HCT116 (cell line): ENCODE measurements at regions of chr6 and their contacts with region 1.

Region 1: DNA sequence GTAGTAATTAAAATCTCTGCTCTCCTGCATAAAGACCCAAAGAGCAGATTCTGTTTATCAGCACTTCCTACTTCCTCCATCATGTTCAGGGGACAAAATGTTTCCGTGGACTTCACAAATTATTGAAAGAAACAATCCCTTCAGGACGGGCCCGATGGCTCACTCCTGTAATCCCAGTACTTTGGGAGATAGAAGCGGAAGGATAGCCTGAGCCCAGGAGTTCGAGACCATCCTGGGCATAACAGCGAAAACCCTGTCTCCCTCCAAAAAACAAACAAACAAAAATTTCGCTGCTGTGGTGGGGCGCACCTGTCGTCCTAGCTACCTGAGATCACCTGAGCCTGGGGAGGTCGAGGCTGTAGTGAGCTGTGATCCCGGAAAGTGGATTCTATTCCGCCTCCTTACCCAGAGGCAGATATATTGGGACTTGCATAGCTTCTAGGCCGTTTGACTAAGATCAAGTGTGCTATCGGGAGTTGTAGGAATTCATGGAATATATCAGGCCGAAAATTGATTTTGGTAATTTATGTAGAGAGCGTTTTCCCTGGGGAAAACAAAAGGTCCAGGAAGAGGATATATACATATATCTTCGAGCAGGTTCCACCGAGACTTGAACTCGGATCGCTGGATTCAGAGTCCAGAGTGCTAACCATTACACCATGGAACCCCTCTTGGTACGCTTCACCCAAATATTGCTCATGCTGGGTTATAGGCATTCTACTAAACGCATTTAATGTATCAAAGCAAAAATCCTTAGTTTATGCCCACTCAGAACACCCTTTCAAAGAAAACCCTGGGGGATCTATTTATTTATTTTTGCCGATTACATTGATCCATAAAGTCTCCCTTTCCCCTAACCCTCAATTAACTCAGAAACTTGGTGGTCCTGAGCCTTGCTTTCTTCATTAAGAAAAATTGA is 74.5 kb upstream of the ZNF184 start:
- DNase-seq: peak; percentile 74
- ATAC-seq: peak; percentile 50
- H3K4me3 ChIP-seq: peak overlapping the region; percentile 34 to 47
- H3K27ac ChIP-seq: peak overlapping the region; percentile 50; the same call in 1 of the 2 replicates
- H3K4me1 ChIP-seq: peaks cover 10 to 55% of the 10 kb centered on the region in 2 experiments
- H3K27me3 ChIP-seq: no peaks in the 10 kb centered on the region
- CTCF ChIP-seq: no peak
- POLR2A ChIP-seq: no peak
- RAD21 ChIP-seq: no peak

Region 2: DNA sequence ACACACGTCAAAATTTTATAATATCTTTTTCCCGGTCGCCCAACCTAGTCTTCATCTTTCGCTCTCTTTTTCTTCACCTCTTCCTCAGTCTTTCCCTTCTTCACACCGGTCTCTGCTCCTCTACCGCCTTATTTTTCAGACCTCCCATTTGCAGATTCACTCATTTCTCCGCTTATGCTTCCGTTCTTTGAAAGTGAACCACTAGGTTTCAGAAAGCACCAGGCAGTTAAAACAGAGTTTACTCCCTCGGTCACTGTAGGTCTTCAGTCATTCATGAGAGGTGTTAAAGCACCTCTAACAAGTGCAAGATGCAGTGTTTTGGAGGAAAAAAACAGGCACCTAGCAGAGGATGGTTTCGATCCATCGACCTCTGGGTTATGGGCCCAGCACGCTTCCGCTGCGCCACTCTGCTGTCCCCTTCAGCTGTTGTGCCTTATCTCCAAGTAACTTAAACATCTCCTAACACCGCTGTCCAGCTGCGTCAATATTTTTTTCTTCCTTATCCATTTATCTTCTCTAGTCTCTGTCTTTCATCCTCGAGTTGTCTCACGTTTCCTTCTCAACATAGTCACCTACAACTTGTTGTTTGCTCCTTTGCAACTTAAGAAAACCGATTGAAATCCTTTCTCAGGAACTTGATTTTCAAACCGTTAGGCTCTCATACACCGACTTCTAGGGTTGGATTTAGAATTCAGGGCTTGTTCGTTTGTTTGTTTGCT is 45.2 kb after region 1 on chr6:
- CTCF ChIA-PET with region 1: no interaction called
- POLR2A ChIA-PET with region 1: interaction called, 5 read pairs
- RAD21 ChIA-PET with region 1: interaction called in 1 of 2 experiments, 4 read pairs
- intact Hi-C with region 1: loop called (anchors 5 kb)
- DNase-seq: no peak
- ATAC-seq: peak; percentile 88
- H3K4me3 ChIP-seq: no peak overlapping the region
- H3K27ac ChIP-seq: no peak overlapping the region
- H3K4me1 ChIP-seq: peaks cover 7 to 30% of the 10 kb centered on the region in 2 experiments
- H3K27me3 ChIP-seq: no peaks in the 10 kb centered on the region
- CTCF ChIP-seq: no peak
- POLR2A ChIP-seq: no peak
- RAD21 ChIP-seq: peak; percentile 8; the same call in 1 of the 2 replicates

Region 3: GRCh38 chr6:27672113-27672799 is 124.8 kb after region 1 on chr6:
- CTCF ChIA-PET with region 1: no interaction called
- POLR2A ChIA-PET with region 1: no interaction called
- RAD21 ChIA-PET with region 1: no interaction called
- intact Hi-C with region 1: loop called (anchors 5 kb)
- DNase-seq: peak; percentile 90
- ATAC-seq: peak; percentile 76
- H3K4me3 ChIP-seq: peak overlapping the region; percentile 17 to 51
- H3K27ac ChIP-seq: peak overlapping the region; percentile 67
- H3K4me1 ChIP-seq: peaks cover 17 to 42% of the 10 kb centered on the region in 2 experiments; a peak in 3 of 4 replicates
- H3K27me3 ChIP-seq: no peaks in the 10 kb centered on the region
- CTCF ChIP-seq: no peak
- POLR2A ChIP-seq: no peak
- RAD21 ChIP-seq: no peak; the same call in 1 of the 2 replicates